ENCODE measurements at regions of chr9 and their contacts with region 1.

Region 1: DNA sequence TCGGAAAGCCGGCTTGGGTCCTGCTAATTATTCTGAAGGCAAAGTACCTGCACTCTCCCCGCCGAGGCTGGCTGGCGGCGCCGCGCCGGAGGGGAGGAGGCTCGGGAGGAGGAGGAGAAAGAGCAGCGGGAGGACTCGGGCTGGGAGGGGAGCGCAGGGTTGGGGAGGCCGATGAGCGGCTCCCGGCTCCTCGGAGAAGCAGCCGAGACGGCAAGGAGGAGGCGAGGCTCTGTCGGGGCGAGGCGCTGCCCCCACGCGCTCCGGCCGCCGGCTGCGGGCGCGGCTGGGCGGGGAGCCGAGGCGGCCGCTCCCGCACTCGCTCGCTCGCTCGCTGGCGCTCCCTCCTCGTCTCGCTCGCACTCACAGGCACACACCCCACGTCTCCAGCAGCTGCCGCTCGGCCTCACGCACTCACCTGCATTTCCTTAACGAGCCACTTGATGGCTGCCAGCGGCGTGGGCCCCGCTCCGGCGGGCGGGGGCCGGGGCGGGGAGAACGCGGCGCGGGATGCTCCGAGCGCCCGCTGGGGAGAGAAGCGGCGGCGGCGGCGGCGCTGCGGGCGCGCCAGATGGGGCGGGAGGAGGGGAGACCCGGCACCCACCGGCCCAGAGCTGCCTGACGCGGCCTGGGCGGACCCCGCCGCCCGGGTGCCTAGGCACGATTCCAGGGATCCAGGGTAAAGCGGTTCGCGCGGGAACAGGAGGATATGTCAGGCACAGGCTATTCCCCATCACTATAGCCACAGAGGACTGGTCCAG is at the start of gene PTPRD:
- DNase-seq: peak in 1 of 2 donors; percentile 8
- ATAC-seq: peak in 3 of 8 donors; percentile 20 to 41 (median 33)
- H3K4me3 ChIP-seq: peak within 1 kb of the TSS; percentile 14 to 45 (median 36)
- H3K27ac ChIP-seq: no peak within 1 kb of the TSS
- H3K4me1 ChIP-seq: peaks cover 0 to 5% (median 0%) of the 10 kb centered on the region in 9 donors
- H3K27me3 ChIP-seq: peaks cover 5 to 80% (median 55%) of the 10 kb centered on the region in 7 donors
- CTCF ChIP-seq: no peak
- total RNA-seq, gene PTPRD: 6.7 to 25.2 (median 15.2) TPM

Region 2: GRCh38 chr9:10274988-10275387 is 337.8 kb before region 1 on chr9:
- intact Hi-C with region 1: loop called in 1 of 10 experiments (anchors 5 kb)
- DNase-seq: no peak
- ATAC-seq: peak in 2 of 8 donors; percentile 14 to 42
- H3K4me3 ChIP-seq: no peak overlapping the region
- H3K27ac ChIP-seq: no peak overlapping the region
- H3K4me1 ChIP-seq: peaks cover 0 to 14% (median 0%) of the 10 kb centered on the region in 9 donors
- H3K27me3 ChIP-seq: no peaks in the 10 kb centered on the region
- CTCF ChIP-seq: peak in 2 of 9 donors; percentile 15 to 24

Region 3: GRCh38 chr9:10674586-10674985 is 61.8 kb after region 1 on chr9:
- intact Hi-C with region 1: no loop called
- DNase-seq: no peak
- ATAC-seq: no peak
- H3K4me3 ChIP-seq: no peak overlapping the region
- H3K27ac ChIP-seq: no peak overlapping the region
- H3K4me1 ChIP-seq: no peaks in the 10 kb centered on the region
- H3K27me3 ChIP-seq: no peaks in the 10 kb centered on the region
- CTCF ChIP-seq: no peak

Measured in heart right ventricle (tissue), 16 donors.